ENCODE measurements at regions of chr5 and their contacts with region 1.

Region 1: DNA sequence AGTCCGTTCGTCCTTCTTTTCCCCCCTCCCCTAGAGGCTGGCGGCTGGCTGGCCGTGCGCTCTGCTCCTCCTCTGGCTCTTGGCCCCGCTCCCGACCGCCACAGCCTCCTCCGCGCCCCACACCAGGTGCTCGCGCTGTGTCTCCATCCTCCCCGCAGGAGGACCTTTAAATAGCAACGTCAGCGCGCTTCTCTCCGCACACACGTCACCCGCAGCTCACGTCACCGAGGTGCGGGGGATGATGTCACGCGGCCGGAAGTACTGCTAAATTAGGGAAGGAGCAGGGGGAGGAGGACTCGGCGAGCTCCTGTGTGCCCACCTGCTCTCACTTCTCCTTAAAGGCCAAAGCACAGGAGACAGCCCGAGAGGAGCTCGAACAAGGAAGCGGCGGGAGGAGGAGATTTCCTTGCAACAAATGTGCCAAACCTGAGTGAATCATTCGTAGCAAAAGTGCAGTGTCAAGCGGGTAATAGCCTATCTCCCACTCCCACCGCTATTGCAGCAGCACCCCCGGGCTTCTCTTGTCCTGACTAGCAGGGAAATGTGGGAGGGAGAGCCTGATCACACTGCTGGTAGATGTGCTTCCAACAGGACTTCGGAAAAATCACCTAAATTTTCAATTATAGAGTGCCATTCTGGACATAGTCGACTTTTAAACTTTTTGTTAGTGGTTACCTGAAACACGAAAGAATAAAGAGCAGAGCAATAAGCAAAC is 614 bp upstream of the HOMER1 start:
- DNase-seq: peak; percentile 79
- H3K4me3 ChIP-seq: peak overlapping the region; percentile 66
- H3K27ac ChIP-seq: peak overlapping the region; percentile 92
- H3K27me3 ChIP-seq: no peaks in the 10 kb centered on the region
- CTCF ChIP-seq: no peak

Region 2: GRCh38 chr5:79243224-79243623 is 271.3 kb before region 1 on chr5:
- CTCF ChIA-PET with region 1: no interaction called
- POLR2A ChIA-PET with region 1: no interaction called
- DNase-seq: no peak
- H3K4me3 ChIP-seq: no peak overlapping the region
- H3K27ac ChIP-seq: no peak overlapping the region
- H3K27me3 ChIP-seq: no peaks in the 10 kb centered on the region
- CTCF ChIP-seq: no peak

Region 3: DNA sequence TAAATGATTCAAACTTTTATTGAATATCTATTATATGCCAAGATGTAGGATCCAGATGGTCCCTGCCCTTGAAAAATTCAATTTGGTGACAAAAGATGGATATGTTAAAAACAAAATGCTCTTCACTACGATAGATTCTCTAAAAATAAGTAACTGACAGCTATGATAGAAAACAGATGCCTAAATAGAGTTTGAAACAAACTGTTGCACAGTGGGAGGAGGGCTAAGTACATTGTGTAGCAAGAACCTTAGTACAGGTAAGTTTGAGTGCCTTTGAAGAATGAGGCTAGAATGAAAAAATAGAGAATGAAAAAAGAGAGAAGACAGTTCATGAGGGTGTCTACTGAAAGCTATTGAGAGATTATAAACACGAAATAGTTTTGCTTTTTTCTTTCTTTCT is 54.9 kb before region 1 on chr5:
- CTCF ChIA-PET with region 1: interaction called, 7 read pairs
- POLR2A ChIA-PET with region 1: interaction called, 10 read pairs
- DNase-seq: no peak
- H3K4me3 ChIP-seq: no peak overlapping the region
- H3K27ac ChIP-seq: no peak overlapping the region
- H3K27me3 ChIP-seq: no peaks in the 10 kb centered on the region
- CTCF ChIP-seq: no peak

Region 4: GRCh38 chr5:79612667-79613198 is 98.2 kb after region 1 on chr5:
- CTCF ChIA-PET with region 1: interaction called, 4 read pairs
- POLR2A ChIA-PET with region 1: interaction called, 10 read pairs
- DNase-seq: no peak
- H3K4me3 ChIP-seq: peak overlapping the region; percentile 90
- H3K27ac ChIP-seq: peak overlapping the region; percentile 90
- H3K27me3 ChIP-seq: no peaks in the 10 kb centered on the region
- CTCF ChIP-seq: no peak

Region 5: GRCh38 chr5:79702606-79703382 is 188.2 kb after region 1 on chr5:
- CTCF ChIA-PET with region 1: no interaction called
- POLR2A ChIA-PET with region 1: no interaction called
- DNase-seq: no peak
- H3K4me3 ChIP-seq: no peak overlapping the region
- H3K27ac ChIP-seq: peak overlapping the region; percentile 34
- H3K27me3 ChIP-seq: no peaks in the 10 kb centered on the region
- CTCF ChIP-seq: peak; percentile 73